Activated CD8-positive, alpha-beta T cell treated with anti-CD3 and anti-CD28 coated beads, Interleukin-2, amount 10 ng/mL, durations not matched to agents 7 days and 5 days (primary cell): ENCODE measurements at regions of chr11 and their contacts with region 1.

Region 1: GRCh38 chr11:17384002-17384511 is 4.4 kb downstream of the KCNJ11 start:
- DNase-seq: peak; percentile 88
- ATAC-seq: peak; percentile 54
- H3K4me3 Mint-ChIP-seq: no peak overlapping the region
- H3K27ac Mint-ChIP-seq: no peak overlapping the region
- H3K4me1 Mint-ChIP-seq: peaks cover 10% of the 10 kb centered on the region
- H3K27me3 Mint-ChIP-seq: peaks cover 3% of the 10 kb centered on the region

Region 2: GRCh38 chr11:17280494-17281127 is 103.4 kb before region 1 on chr11:
- CTCF ChIA-PET with region 1: no interaction called
- POLR2A ChIA-PET with region 1: no interaction called
- DNase-seq: no peak
- ATAC-seq: no peak
- H3K4me3 Mint-ChIP-seq: peak overlapping the region; percentile 62
- H3K27ac Mint-ChIP-seq: peak overlapping the region; percentile 67
- H3K4me1 Mint-ChIP-seq: peaks cover 54% of the 10 kb centered on the region
- H3K27me3 Mint-ChIP-seq: no peaks in the 10 kb centered on the region

Region 3: GRCh38 chr11:17354601-17354991 is 29.5 kb before region 1 on chr11:
- CTCF ChIA-PET with region 1: interaction called, 25 read pairs
- POLR2A ChIA-PET with region 1: no interaction called
- DNase-seq: peak; percentile 85
- ATAC-seq: peak; percentile 23
- H3K4me3 Mint-ChIP-seq: peak overlapping the region; percentile 82
- H3K27ac Mint-ChIP-seq: no peak overlapping the region
- H3K4me1 Mint-ChIP-seq: peaks cover 37% of the 10 kb centered on the region
- H3K27me3 Mint-ChIP-seq: peaks cover 3% of the 10 kb centered on the region

Region 4: DNA sequence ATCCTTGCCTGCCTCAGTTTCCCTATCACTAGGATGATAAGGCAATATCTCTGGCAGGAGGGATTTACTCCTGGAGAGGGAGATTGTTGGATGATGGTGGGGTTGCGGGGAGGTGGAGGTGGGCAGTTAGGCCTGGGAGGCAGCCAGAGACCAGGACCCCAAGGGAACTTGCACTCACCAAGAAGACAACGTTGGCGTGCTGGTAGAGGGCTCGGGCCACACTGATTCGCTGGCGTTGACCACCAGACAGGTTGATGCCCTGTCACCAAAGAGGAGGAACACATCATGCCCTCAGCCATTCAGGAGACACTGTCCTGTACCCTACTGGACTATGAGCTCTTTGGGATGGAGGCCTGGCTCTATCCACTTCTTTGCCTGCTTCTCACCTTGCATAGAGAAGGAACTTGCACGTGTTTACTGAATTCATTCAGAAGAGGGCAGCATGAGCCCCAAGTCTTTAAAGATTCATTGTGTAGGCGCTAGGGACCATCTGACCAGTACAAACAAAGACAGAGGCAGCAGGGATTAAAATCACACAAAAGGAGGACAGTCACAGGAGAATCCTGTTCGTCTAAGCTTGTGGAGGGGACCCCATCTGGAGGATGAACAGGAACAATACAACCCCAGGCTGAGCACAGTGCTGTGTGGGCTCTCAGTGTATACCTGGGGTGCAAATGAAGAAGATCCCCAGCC is 28.6 kb after region 1 on chr11:
- CTCF ChIA-PET with region 1: interaction called, 10 read pairs
- POLR2A ChIA-PET with region 1: no interaction called
- DNase-seq: no peak
- ATAC-seq: no peak
- H3K4me3 Mint-ChIP-seq: no peak overlapping the region
- H3K27ac Mint-ChIP-seq: no peak overlapping the region
- H3K4me1 Mint-ChIP-seq: peaks cover 49% of the 10 kb centered on the region
- H3K27me3 Mint-ChIP-seq: peaks cover 18% of the 10 kb centered on the region

Region 5: GRCh38 chr11:17504330-17505107 is 120.5 kb after region 1 on chr11:
- CTCF ChIA-PET with region 1: interaction called, 101 read pairs
- POLR2A ChIA-PET with region 1: no interaction called
- DNase-seq: peak; percentile 86
- ATAC-seq: peak; percentile 85
- H3K4me3 Mint-ChIP-seq: no peak overlapping the region
- H3K27ac Mint-ChIP-seq: no peak overlapping the region
- H3K4me1 Mint-ChIP-seq: no peaks in the 10 kb centered on the region
- H3K27me3 Mint-ChIP-seq: peaks cover 8% of the 10 kb centered on the region

Region 6: GRCh38 chr11:17528181-17528691 is 144.2 kb after region 1 on chr11:
- CTCF ChIA-PET with region 1: interaction called, 34 read pairs
- POLR2A ChIA-PET with region 1: no interaction called
- DNase-seq: peak; percentile 65
- ATAC-seq: peak; percentile 88
- H3K4me3 Mint-ChIP-seq: no peak overlapping the region
- H3K27ac Mint-ChIP-seq: no peak overlapping the region
- H3K4me1 Mint-ChIP-seq: no peaks in the 10 kb centered on the region
- H3K27me3 Mint-ChIP-seq: peaks cover 4% of the 10 kb centered on the region